ENCODE measurements at regions of chr6 and their contacts with region 1.

Region 1: GRCh38 chr6:76861403-76861802 is 601.9 kb downstream of the HTR1B start:
- DNase-seq: no peak
- ATAC-seq: peak; percentile 99
- H3K4me3 ChIP-seq: no peak overlapping the region
- H3K27ac ChIP-seq: no peak overlapping the region
- H3K4me1 ChIP-seq: no peaks in the 10 kb centered on the region
- H3K27me3 ChIP-seq: no peaks in the 10 kb centered on the region
- CTCF ChIP-seq: peak; percentile 33 to 53 (median 43); a peak in 4 of 6 replicates
- EP300 ChIP-seq: no peak
- POLR2A ChIP-seq: no peak
- RAD21 ChIP-seq: peak; percentile 38

Region 2: GRCh38 chr6:76057469-76057868 is 803.9 kb before region 1 on chr6:
- CTCF ChIA-PET with region 1: no interaction called
- POLR2A ChIA-PET with region 1: no interaction called
- RAD21 ChIA-PET with region 1: no interaction called
- SMC1A ChIA-PET with region 1: no interaction called
- in situ Hi-C with region 1: no loop called
- intact Hi-C with region 1: no loop called
- DNase-seq: no peak
- ATAC-seq: no peak
- H3K4me3 ChIP-seq: no peak overlapping the region
- H3K27ac ChIP-seq: no peak overlapping the region
- H3K4me1 ChIP-seq: no peaks in the 10 kb centered on the region
- H3K27me3 ChIP-seq: no peaks in the 10 kb centered on the region
- CTCF ChIP-seq: no peak
- EP300 ChIP-seq: no peak
- POLR2A ChIP-seq: no peak
- RAD21 ChIP-seq: no peak

Region 3: GRCh38 chr6:76275746-76276145 is 585.7 kb before region 1 on chr6:
- CTCF ChIA-PET with region 1: no interaction called
- POLR2A ChIA-PET with region 1: no interaction called
- RAD21 ChIA-PET with region 1: no interaction called
- SMC1A ChIA-PET with region 1: no interaction called
- in situ Hi-C with region 1: no loop called
- intact Hi-C with region 1: loop called (anchors 10 kb)
- DNase-seq: no peak
- ATAC-seq: peak; percentile 77
- H3K4me3 ChIP-seq: no peak overlapping the region
- H3K27ac ChIP-seq: no peak overlapping the region
- H3K4me1 ChIP-seq: no peaks in the 10 kb centered on the region
- H3K27me3 ChIP-seq: no peaks in the 10 kb centered on the region
- CTCF ChIP-seq: peak in 2 of 3 experiments; percentile 25 to 31; a peak in 2 of 6 replicates
- EP300 ChIP-seq: no peak
- POLR2A ChIP-seq: no peak
- RAD21 ChIP-seq: peak; percentile 28

Region 4: DNA sequence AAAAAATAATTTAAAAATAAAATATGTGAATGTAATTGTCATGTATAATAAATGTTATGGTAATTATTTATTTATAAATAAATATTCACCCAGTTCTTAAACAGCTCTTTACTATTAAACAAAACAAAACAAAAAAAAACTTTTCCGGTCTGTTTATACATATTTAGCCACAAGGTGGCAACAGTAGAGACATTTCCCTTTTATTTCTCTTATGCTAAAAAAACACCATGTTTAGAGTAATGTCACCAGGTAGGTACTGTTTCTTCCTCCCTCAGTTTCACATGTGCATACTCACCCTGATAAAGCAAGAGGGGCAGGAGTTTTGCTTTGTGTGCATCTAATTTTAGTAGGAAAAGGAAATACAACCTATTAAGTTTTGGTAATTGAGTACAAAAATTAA is 178.6 kb before region 1 on chr6:
- CTCF ChIA-PET with region 1: interaction called, 9 read pairs
- POLR2A ChIA-PET with region 1: no interaction called
- RAD21 ChIA-PET with region 1: interaction called, 3 read pairs
- SMC1A ChIA-PET with region 1: interaction called, 5 read pairs
- in situ Hi-C with region 1: no loop called
- intact Hi-C with region 1: loop called (anchors 5 kb)
- DNase-seq: no peak
- ATAC-seq: peak; percentile 55; the same call in 2 of the 3 replicates
- H3K4me3 ChIP-seq: no peak overlapping the region
- H3K27ac ChIP-seq: no peak overlapping the region
- H3K4me1 ChIP-seq: no peaks in the 10 kb centered on the region
- H3K27me3 ChIP-seq: no peaks in the 10 kb centered on the region
- CTCF ChIP-seq: peak in 2 of 3 experiments; percentile 21 to 31; a peak in 3 of 6 replicates
- EP300 ChIP-seq: no peak
- POLR2A ChIP-seq: no peak
- RAD21 ChIP-seq: no peak

Region 5: DNA sequence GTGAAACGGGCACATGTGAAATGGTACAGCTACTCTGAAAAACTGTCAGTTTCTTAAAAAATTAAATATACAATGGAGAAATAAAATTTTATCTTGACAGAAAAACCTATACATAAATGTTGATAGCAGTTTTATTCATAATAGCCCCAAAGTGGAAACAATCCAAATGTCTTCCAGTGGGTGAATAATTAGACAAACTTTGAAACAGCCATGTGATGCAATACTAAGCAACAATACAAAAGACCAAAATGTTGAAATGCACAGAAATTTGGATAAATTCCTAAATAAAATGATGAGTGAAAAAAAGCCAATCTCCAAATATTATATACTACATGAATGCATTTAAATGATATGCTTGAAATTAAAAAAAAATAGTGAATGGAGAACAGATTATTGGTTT is 78.8 kb after region 1 on chr6:
- CTCF ChIA-PET with region 1: no interaction called
- POLR2A ChIA-PET with region 1: no interaction called
- RAD21 ChIA-PET with region 1: no interaction called
- SMC1A ChIA-PET with region 1: no interaction called
- in situ Hi-C with region 1: no loop called
- intact Hi-C with region 1: no loop called
- DNase-seq: no peak
- ATAC-seq: no peak
- H3K4me3 ChIP-seq: no peak overlapping the region
- H3K27ac ChIP-seq: no peak overlapping the region
- H3K4me1 ChIP-seq: no peaks in the 10 kb centered on the region
- H3K27me3 ChIP-seq: no peaks in the 10 kb centered on the region
- CTCF ChIP-seq: no peak
- EP300 ChIP-seq: no peak
- POLR2A ChIP-seq: no peak
- RAD21 ChIP-seq: no peak

Measured in GM12878 (cell line).